Right cardiac atrium (tissue), 5 donors: ENCODE measurements at regions of chr17 and their contacts with region 1.

Region 1: GRCh38 chr17:30104575-30105339 is 11.9 kb upstream of the NSRP1 start:
- DNase-seq: peak; percentile 77 to 86 (median 79)
- ATAC-seq: peak; percentile 96 to 97
- H3K4me3 ChIP-seq: peak overlapping the region; percentile 66
- H3K27ac ChIP-seq: peak overlapping the region; percentile 77
- H3K4me1 ChIP-seq: peaks cover 2% of the 10 kb centered on the region
- H3K27me3 ChIP-seq: no peaks in the 10 kb centered on the region

Region 2: DNA sequence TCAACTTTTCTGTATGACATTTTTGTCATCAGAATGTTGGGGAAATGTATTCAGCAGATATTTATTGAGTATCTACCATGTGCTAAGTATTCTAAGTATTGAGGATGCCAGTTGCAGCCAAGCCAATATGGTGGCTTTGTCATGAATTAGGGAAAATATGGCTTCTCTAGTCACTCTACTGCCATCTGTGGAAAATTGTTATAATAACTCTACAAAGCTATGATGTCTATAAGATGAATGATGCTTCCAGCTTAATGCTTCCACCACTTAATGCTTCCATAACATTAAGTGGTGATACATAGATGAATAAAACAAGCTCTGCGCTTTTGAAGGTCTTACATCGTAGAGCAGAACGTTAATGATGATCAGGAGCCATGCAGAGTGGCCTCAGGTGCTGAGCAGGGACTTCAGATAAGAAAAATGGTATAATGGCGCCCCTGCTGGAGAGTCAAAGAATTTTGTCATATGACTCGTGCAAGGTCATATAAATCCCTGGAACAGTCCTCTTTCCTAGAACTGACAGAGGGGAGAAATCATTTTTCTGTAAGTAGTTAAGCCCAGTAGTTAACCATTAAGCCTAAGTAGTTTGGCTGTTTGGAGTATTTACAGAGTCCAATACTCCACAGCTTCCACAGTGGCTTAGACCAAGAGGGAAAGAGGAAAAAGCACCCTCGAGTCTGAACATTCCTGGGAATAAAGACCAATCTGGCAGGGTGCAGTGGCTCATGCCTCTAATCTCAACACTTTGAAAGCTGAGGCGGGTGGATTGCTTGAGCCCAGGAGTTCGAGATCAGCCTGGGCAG is 231.8 kb after region 1 on chr17:
- intact Hi-C with region 1: loop called in 1 of 4 experiments (anchors 10 kb)
- DNase-seq: no peak
- ATAC-seq: no peak
- H3K4me3 ChIP-seq: no peak overlapping the region
- H3K27ac ChIP-seq: no peak overlapping the region
- H3K4me1 ChIP-seq: no peaks in the 10 kb centered on the region
- H3K27me3 ChIP-seq: no peaks in the 10 kb centered on the region